Thyroid gland (tissue), 4 donors: ENCODE measurements at regions of chr1 and their contacts with region 1.

Region 1: DNA sequence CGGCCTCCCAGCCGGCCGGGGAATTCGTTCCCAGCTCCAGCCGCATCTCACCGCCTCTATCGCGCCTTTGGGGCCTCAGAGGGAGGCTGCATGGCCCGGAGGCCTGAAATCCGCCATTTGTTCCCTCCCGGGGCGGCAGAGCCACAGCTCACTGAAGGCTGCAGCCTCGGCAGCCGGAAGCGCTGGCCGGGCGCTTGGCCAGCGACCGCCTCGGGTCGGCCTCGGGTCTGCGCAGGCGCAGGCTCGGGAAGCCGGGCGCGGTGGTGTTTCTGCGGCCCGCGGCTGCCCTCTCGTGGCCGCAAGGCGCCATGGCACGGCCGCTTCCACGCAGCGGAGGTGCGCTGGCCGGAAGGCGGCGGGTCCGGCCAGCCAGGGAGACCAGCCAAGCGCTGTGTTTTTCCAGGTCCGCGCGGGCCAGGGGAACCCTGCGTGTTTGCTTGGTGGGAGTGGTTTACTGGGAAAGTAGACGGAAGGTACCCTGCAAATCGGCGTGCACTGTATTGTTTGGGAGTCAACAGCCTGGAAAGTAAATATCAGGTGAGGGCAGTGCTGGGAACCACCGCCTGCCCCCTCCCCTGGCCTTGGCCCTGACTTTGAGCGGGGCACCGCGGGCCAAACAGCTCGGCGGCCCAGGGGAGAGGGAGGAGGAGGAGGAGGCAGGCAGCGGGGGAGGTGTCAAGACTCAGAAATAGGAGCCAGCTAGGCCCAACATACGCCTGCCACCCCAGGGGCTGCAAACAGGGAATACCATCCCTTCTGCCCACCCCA is 52.7 kb upstream of the CD34 start:
- DNase-seq: peak; percentile 94
- H3K4me3 ChIP-seq: peak overlapping the region; percentile 25 to 38 (median 33)
- H3K27ac ChIP-seq: peak overlapping the region; percentile 94 to 96 (median 94)
- H3K4me1 ChIP-seq: peaks cover 15 to 35% of the 10 kb centered on the region in 2 donors
- H3K27me3 ChIP-seq: no peaks in the 10 kb centered on the region
- CTCF ChIP-seq: peak; percentile 77 to 100 (median 100)
- POLR2A ChIP-seq: peak; percentile 82 to 95

Region 2: DNA sequence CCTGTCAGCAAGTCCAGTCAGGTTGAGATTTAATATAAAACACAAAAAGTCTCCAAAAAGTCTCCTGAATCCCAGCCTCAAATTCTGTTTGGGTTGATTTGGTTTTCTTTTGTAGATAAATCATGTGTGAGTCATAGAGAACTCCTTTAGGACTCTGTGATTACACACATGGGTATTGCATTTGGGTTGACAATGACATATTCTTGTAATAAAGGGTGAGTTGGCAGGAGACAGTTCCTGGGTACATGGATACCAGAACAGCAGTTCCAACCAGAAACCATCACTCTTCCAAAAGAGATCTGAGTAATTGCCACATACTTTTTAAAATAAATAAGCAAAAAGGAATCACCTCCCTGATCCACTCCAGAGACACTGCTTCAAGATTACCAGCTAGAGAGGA is 500.6 kb before region 1 on chr1:
- intact Hi-C with region 1: no loop called
- DNase-seq: no peak
- H3K4me3 ChIP-seq: no peak overlapping the region
- H3K27ac ChIP-seq: no peak overlapping the region
- H3K4me1 ChIP-seq: no peaks in the 10 kb centered on the region
- H3K27me3 ChIP-seq: no peaks in the 10 kb centered on the region
- CTCF ChIP-seq: no peak
- POLR2A ChIP-seq: no peak

Region 3: GRCh38 chr1:207897188-207897587 is 66.4 kb before region 1 on chr1:
- intact Hi-C with region 1: loop called (anchors 5 kb)
- DNase-seq: no peak
- H3K4me3 ChIP-seq: no peak overlapping the region
- H3K27ac ChIP-seq: peak overlapping the region in 1 of 3 donors; percentile 34
- H3K4me1 ChIP-seq: no peaks in the 10 kb centered on the region
- H3K27me3 ChIP-seq: no peaks in the 10 kb centered on the region
- CTCF ChIP-seq: peak in 5 of 6 experiments; percentile 19 to 63 (median 29)
- POLR2A ChIP-seq: no peak

Region 4: DNA sequence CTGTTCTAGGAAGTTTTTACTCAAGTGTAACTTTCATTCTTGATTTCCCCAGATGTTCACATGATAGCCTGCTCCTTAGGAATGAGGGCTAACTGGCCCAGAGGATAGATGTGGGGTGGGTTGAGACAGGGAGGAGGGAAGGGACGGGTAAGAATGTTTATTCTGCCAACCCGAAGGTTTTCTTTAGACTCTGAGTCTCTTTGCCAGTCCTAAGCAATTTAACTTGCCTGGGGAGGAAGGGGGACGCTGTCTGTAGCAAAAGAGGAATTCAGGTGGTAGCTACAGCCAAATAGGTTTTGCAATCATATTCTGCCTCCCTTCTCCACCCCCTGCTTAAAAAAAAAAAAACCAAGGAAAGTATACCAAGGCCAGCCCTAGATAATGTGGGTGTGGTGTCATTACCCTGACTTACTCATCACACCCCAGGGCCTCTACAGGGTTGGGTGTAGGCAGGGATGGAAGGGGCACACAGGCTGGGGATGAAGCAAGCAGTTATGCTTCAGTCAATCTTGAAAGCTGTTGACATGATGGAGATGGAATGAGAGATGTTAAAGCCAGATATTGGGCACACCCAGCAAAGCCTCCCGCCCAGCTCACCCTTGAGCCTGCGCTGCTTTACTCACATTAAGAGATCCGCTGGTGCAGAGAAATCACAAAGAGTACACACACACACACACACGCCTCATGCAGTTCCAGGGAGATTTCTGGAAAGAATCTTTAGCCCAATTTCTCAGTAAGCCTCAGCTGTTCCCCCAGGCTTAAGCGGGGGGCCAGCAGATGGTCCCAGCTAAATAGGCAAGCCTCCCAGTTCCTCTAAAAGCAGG is 220.7 kb after region 1 on chr1:
- intact Hi-C with region 1: no loop called
- DNase-seq: peak; percentile 74 to 77
- H3K4me3 ChIP-seq: no peak overlapping the region
- H3K27ac ChIP-seq: peak overlapping the region; percentile 40 to 97 (median 85)
- H3K4me1 ChIP-seq: peaks cover 38 to 69% of the 10 kb centered on the region in 2 donors
- H3K27me3 ChIP-seq: no peaks in the 10 kb centered on the region
- CTCF ChIP-seq: no peak
- POLR2A ChIP-seq: peak in 1 of 2 donors; percentile 18

Region 5: DNA sequence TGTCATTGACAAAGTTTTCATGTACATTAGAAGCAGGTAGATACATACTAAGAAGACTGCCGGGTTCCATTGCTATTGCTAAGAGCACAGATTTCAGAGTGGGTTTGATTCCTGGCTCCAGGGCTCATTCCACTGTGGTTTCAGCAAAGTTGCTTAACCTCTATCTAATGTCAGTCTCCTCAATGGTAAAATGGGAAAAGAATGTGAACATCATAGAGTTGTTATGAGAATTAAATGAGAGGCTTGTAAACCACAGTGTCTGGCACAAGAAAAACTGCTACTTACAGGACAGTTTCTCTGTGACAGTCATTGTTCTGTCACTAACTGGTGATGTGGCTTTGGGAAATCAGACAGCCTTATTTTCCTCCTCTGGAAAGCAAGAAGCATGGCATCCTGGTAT is 291.2 kb after region 1 on chr1:
- intact Hi-C with region 1: no loop called
- DNase-seq: no peak
- H3K4me3 ChIP-seq: no peak overlapping the region
- H3K27ac ChIP-seq: no peak overlapping the region
- H3K4me1 ChIP-seq: peaks cover 0 to 3% of the 10 kb centered on the region in 2 donors
- H3K27me3 ChIP-seq: no peaks in the 10 kb centered on the region
- CTCF ChIP-seq: no peak
- POLR2A ChIP-seq: no peak